ENCODE measurements at regions of chr13 and their contacts with region 1.

Region 1: GRCh38 chr13:99307648-99308339 is 595 bp upstream of the GPR183 start:
- DNase-seq: peak in 2 of 5 donors; percentile 49 to 83
- H3K4me3 ChIP-seq: peak overlapping the region; percentile 47 to 78
- H3K4me3 Mint-ChIP-seq: peak overlapping the region; percentile 88 to 100 (median 99)
- H3K27ac ChIP-seq: peak overlapping the region; percentile 77
- H3K27ac Mint-ChIP-seq: peak overlapping the region; percentile 88 to 99 (median 96)
- H3K4me1 ChIP-seq: peaks cover 71% of the 10 kb centered on the region
- H3K4me1 Mint-ChIP-seq: peaks cover 48 to 82% (median 58%) of the 10 kb centered on the region in 4 donors
- H3K27me3 ChIP-seq: no peaks in the 10 kb centered on the region
- H3K27me3 Mint-ChIP-seq: no peaks in the 10 kb centered on the region

Region 2: DNA sequence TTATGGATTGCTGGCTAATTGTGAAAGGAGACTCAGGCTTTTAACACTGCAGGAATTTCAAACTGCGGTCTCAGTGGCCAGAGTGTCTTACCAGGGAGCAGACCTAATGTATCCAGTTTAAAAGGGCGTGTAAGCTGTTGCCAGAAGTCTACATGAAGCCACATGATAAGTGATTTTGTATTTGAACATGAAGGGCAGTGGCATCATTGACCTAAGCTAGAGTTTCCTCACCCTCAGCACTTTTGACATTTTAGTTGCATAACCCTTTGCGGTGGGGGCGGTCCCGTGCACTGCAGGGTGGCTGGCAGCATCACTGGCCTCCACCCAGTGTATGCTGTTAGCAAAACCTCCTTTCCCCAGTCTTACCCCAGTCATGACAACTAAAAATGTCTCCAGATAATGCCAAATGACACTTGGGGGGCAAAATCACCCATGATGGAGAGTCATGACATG is 26.0 kb before region 1 on chr13:
- CTCF ChIA-PET with region 1: interaction called, 217 read pairs
- POLR2A ChIA-PET with region 1: interaction called, 406 read pairs
- intact Hi-C with region 1: loop called (anchors 2 kb)
- DNase-seq: peak; percentile 65 to 79 (median 74)
- H3K4me3 ChIP-seq: peak overlapping the region in 1 of 2 donors; percentile 16
- H3K4me3 Mint-ChIP-seq: peak overlapping the region; percentile 67 to 92 (median 82)
- H3K27ac ChIP-seq: peak overlapping the region; percentile 66
- H3K27ac Mint-ChIP-seq: peak overlapping the region; percentile 88 to 100 (median 99)
- H3K4me1 ChIP-seq: peaks cover 96% of the 10 kb centered on the region
- H3K4me1 Mint-ChIP-seq: peaks cover 77 to 99% (median 88%) of the 10 kb centered on the region in 4 donors
- H3K27me3 ChIP-seq: no peaks in the 10 kb centered on the region
- H3K27me3 Mint-ChIP-seq: no peaks in the 10 kb centered on the region

Region 3: GRCh38 chr13:99322297-99323103 is 14.7 kb after region 1 on chr13:
- CTCF ChIA-PET with region 1: interaction called, 10 read pairs
- POLR2A ChIA-PET with region 1: interaction called, 247 read pairs
- intact Hi-C with region 1: loop called (anchors 1 kb)
- DNase-seq: peak; percentile 63 to 72 (median 68)
- H3K4me3 ChIP-seq: peak overlapping the region in 1 of 2 donors; percentile 5
- H3K4me3 Mint-ChIP-seq: peak overlapping the region; percentile 20 to 82 (median 68)
- H3K27ac ChIP-seq: peak overlapping the region; percentile 79
- H3K27ac Mint-ChIP-seq: peak overlapping the region; percentile 91 to 99 (median 94)
- H3K4me1 ChIP-seq: peaks cover 87% of the 10 kb centered on the region
- H3K4me1 Mint-ChIP-seq: peaks cover 54 to 84% (median 69%) of the 10 kb centered on the region in 4 donors
- H3K27me3 ChIP-seq: no peaks in the 10 kb centered on the region
- H3K27me3 Mint-ChIP-seq: no peaks in the 10 kb centered on the region

Region 4: DNA sequence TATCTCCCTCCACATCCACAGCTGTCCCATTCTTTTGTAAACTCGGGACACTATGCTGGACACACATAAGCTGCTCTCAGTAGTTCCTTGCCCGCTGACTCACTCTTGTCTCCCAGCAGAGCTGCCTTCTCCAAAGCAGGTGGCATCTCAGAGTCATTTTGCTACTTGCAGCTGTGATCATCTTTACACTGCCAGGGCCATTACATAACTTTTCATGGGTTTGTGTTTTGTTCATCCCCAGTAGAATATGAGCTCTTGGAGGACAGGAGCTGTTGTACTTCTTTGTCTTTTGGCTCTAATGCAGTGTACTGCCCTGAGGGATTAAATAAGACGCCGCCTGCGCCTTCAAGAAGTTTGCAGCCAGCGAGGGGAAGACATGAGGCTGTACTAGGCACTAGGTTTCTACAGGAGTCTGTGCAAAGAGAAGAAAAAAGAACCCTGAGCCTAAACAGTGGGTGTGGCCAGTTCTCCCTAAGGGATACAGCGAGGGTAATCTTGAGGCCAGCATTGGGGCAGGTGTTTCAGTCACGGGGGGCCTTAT is 40.2 kb after region 1 on chr13:
- CTCF ChIA-PET with region 1: interaction called, 32 read pairs
- POLR2A ChIA-PET with region 1: interaction called, 929 read pairs
- intact Hi-C with region 1: loop called (anchors 1 kb)
- DNase-seq: no peak
- H3K4me3 ChIP-seq: no peak overlapping the region
- H3K4me3 Mint-ChIP-seq: peak overlapping the region in 5 of 8 donors; percentile 30 to 66 (median 56)
- H3K27ac ChIP-seq: peak overlapping the region; percentile 9
- H3K27ac Mint-ChIP-seq: peak overlapping the region; percentile 79 to 99 (median 94)
- H3K4me1 ChIP-seq: peaks cover 84% of the 10 kb centered on the region
- H3K4me1 Mint-ChIP-seq: peaks cover 79 to 98% (median 88%) of the 10 kb centered on the region in 4 donors
- H3K27me3 ChIP-seq: no peaks in the 10 kb centered on the region
- H3K27me3 Mint-ChIP-seq: no peaks in the 10 kb centered on the region

Region 5: GRCh38 chr13:99374994-99375737 is 67.4 kb after region 1 on chr13:
- CTCF ChIA-PET with region 1: interaction called, 142 read pairs
- POLR2A ChIA-PET with region 1: interaction called, 361 read pairs
- intact Hi-C with region 1: no loop called
- DNase-seq: peak; percentile 73 to 89 (median 82)
- H3K4me3 ChIP-seq: peak overlapping the region in 1 of 2 donors; percentile 15
- H3K4me3 Mint-ChIP-seq: peak overlapping the region; percentile 61 to 77 (median 68)
- H3K27ac ChIP-seq: peak overlapping the region; percentile 39
- H3K27ac Mint-ChIP-seq: peak overlapping the region; percentile 96 to 100 (median 98)
- H3K4me1 ChIP-seq: peaks cover 85% of the 10 kb centered on the region
- H3K4me1 Mint-ChIP-seq: peaks cover 58 to 95% (median 79%) of the 10 kb centered on the region in 4 donors
- H3K27me3 ChIP-seq: no peaks in the 10 kb centered on the region
- H3K27me3 Mint-ChIP-seq: no peaks in the 10 kb centered on the region

Region 6: DNA sequence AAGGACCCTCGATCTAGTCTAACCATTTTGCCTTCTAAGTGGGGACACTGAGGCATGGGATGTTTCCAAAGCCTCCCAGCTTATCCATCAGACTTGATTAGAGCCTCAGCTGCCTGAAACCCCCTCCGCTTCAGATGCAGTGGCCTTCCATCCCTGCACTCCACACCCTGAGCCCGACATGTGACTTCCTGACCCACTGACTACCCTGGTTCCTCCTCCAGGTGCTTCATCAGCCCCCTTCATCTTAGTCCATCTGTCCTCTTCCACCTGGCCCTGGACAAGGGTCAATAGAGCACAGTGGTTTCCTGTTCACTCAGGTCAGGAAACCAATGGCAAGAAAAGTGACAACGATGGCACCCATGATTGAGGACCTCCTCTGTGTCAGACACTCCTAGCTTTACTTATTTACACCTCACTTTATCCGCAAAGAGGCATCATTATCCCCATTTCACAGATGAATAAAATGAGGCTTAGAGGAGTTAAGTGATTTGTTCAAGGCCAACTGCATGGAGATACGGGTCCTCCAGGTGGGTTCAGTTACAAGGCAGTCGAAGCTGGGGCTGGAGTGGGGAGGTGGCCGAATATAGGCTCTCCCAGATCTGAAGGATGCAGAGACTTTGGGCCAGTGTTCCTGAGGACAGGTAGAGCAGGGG is 111.9 kb after region 1 on chr13:
- CTCF ChIA-PET with region 1: no interaction called
- POLR2A ChIA-PET with region 1: interaction called, 10 read pairs
- intact Hi-C with region 1: no loop called
- DNase-seq: no peak
- H3K4me3 ChIP-seq: peak overlapping the region in 1 of 2 donors; percentile 27
- H3K4me3 Mint-ChIP-seq: peak overlapping the region; percentile 78 to 96 (median 86)
- H3K27ac ChIP-seq: peak overlapping the region; percentile 41
- H3K27ac Mint-ChIP-seq: peak overlapping the region; percentile 89 to 97 (median 93)
- H3K4me1 ChIP-seq: peaks cover 46% of the 10 kb centered on the region
- H3K4me1 Mint-ChIP-seq: peaks cover 27 to 58% (median 40%) of the 10 kb centered on the region in 4 donors
- H3K27me3 ChIP-seq: no peaks in the 10 kb centered on the region
- H3K27me3 Mint-ChIP-seq: no peaks in the 10 kb centered on the region